ENCODE measurements at regions of chr5 and their contacts with region 1.

Region 1: DNA sequence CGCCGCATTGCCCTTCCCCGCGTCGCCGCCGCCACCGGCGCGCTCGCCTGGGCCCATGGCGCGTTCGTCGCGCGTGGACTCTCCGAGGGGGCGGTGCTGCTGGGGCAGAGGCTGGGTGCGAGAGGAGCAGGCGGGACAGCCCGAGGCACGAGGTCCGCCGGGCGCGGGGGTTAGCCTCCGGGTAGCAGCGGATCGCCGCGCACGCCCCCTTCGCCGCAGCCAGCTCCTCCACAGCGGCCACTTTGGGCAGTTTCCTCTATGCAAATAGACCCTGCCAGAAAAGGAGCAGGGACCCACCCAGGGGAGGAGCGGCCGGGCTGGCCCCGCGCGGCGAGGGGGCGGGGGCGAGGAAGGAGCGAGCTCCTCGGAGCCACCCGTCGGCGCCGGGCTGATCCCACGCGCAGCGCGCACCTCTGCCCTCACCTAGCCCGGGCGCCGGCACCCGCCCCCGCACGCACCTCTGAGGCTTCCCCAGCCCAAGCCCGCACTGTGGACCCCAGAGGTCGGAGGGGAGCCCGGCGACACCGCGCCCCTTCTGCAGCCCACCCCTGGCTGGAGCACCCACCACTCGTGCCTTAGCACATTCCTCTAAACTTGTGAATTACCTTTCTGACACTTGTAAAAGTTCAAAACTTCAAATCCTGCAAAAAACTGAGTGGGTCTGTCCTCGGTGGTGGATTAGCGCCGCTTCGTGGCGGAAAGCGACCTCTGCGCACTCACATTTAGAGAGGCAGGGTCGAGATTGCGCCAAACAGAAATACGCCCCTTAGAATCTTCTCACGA is at the start of gene COL23A1:
- DNase-seq: peak; percentile 59 to 81
- ATAC-seq: peak; percentile 67 to 77 (median 76)
- H3K4me3 ChIP-seq: peak within 1 kb of the TSS; percentile 73
- H3K27ac ChIP-seq: peak within 1 kb of the TSS; percentile 82
- H3K4me1 ChIP-seq: peaks cover 14% of the 10 kb centered on the region
- H3K27me3 ChIP-seq: peaks cover 0 to 9% (median 2%) of the 10 kb centered on the region in 3 donors
- CTCF ChIP-seq: peak; percentile 58
- total RNA-seq, gene COL23A1: 0.66 to 3.0 (median 1.4) TPM

Region 2: GRCh38 chr5:178232124-178232919 is 358.0 kb before region 1 on chr5 and contains the start of gene PHYKPL:
- intact Hi-C with region 1: loop called in 1 of 2 experiments (anchors 5 kb)
- DNase-seq: peak; percentile 86 to 90
- ATAC-seq: peak; percentile 59 to 69 (median 66)
- H3K4me3 ChIP-seq: peak within 1 kb of the TSS; percentile 94
- H3K27ac ChIP-seq: peak within 1 kb of the TSS; percentile 99
- H3K4me1 ChIP-seq: peaks cover 55% of the 10 kb centered on the region
- H3K27me3 ChIP-seq: no peaks in the 10 kb centered on the region
- CTCF ChIP-seq: no peak
- total RNA-seq, gene PHYKPL: 43.2 to 51.6 (median 45.2) TPM

Region 3: GRCh38 chr5:178279725-178280438 is 310.4 kb before region 1 on chr5:
- intact Hi-C with region 1: loop called (anchors 1 to 10 kb)
- DNase-seq: peak; percentile 88 to 94
- ATAC-seq: peak; percentile 93 to 99 (median 95)
- H3K4me3 ChIP-seq: no peak overlapping the region
- H3K27ac ChIP-seq: no peak overlapping the region
- H3K4me1 ChIP-seq: no peaks in the 10 kb centered on the region
- H3K27me3 ChIP-seq: peaks cover 0 to 5% (median 4%) of the 10 kb centered on the region in 3 donors
- CTCF ChIP-seq: peak; percentile 94